HCT116 (cell line): ENCODE measurements at regions of chrX and their contacts with region 1.

Region 1: DNA sequence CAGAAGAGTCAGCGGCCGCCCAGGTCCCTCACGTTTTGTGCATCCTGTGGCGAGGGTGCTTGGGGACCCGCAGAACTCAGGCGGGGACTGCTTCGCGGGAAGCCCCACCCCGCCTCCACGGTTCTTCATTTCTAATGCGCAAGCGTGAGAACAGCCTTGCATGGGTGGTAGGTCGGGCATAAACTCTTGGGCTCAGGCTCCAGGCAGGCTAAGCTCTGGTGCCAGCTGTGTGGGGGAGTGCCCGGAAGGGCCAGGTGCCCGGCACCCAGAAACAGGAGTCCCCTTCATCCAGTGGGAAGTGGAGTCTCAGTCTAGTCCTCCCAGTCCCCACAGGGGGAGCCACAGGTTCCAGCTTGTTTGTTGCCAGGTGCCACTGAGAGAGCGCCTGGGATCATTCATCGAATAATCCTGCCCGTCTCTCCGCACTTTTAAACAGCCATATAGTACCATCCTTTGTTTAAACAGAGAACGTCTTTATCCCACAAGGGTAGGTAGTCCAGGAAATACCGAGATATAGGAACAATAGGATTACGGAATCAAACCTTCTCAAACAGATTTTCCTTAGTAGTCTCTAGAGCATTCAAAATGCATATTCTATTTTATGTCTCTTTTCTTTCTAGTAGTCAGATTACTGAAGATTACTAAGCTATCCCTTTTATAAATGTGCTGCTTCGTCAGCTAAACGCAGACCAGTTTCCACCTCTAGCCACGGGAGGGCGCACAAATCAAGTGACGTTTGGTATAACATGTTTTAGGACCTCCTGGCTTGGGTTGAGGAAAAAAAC is 12.7 kb upstream of the RBBP7 start:
- DNase-seq: peak; percentile 37
- ATAC-seq: peak; percentile 90
- H3K4me3 ChIP-seq: peak overlapping the region; percentile 41 to 58
- H3K27ac ChIP-seq: peak overlapping the region; percentile 55
- H3K4me1 ChIP-seq: peaks cover 3 to 9% of the 10 kb centered on the region in 2 experiments; a peak in 3 of 4 replicates
- H3K27me3 ChIP-seq: no peaks in the 10 kb centered on the region
- CTCF ChIP-seq: peak; percentile 54 to 75 (median 61); a peak in 5 of 6 replicates
- POLR2A ChIP-seq: peak; percentile 28
- RAD21 ChIP-seq: peak; percentile 70

Region 2: DNA sequence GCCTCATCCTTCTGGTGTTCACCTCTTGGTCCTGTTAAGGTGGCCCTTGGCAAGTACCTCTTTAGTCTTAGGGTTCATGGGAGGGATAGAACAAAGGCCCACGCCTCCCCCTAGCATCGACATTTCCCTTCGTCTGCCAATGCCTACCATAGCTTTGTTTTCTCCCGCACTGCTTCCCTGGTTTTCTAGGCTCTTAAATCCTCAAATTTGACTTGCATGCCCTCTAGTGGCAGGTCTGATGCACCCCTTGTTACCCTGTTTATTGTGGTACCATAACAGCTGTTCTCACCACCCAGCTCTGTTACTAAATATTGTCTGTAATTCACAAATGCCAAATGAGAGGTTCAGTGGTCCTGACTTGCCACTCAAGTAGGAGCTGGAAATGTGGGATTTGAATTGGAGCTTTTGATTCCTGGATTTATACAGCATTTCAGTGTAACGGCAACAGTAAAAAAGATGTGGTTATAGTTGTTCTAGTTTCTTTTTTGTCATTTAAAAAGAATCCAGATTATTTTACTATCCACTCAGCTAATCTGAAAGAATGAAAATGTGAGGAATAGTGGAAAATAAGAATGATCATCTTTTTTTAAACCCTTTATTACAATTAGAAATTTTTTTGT is 163.7 kb after region 1 on chrX:
- CTCF ChIA-PET with region 1: interaction called, 88 read pairs
- POLR2A ChIA-PET with region 1: interaction called, 11 read pairs
- RAD21 ChIA-PET with region 1: interaction called, 8 to 13 read pairs
- intact Hi-C with region 1: loop called (anchors 1 kb)
- DNase-seq: peak; percentile 44
- ATAC-seq: peak; percentile 90
- H3K4me3 ChIP-seq: no peak overlapping the region
- H3K27ac ChIP-seq: no peak overlapping the region
- H3K4me1 ChIP-seq: no peaks in the 10 kb centered on the region
- H3K27me3 ChIP-seq: no peaks in the 10 kb centered on the region
- CTCF ChIP-seq: peak; percentile 66 to 69 (median 68)
- POLR2A ChIP-seq: no peak
- RAD21 ChIP-seq: peak; percentile 80